Stomach (tissue), 19 donors: ENCODE measurements at regions of chr22 and their contacts with region 1.

Region 1: DNA sequence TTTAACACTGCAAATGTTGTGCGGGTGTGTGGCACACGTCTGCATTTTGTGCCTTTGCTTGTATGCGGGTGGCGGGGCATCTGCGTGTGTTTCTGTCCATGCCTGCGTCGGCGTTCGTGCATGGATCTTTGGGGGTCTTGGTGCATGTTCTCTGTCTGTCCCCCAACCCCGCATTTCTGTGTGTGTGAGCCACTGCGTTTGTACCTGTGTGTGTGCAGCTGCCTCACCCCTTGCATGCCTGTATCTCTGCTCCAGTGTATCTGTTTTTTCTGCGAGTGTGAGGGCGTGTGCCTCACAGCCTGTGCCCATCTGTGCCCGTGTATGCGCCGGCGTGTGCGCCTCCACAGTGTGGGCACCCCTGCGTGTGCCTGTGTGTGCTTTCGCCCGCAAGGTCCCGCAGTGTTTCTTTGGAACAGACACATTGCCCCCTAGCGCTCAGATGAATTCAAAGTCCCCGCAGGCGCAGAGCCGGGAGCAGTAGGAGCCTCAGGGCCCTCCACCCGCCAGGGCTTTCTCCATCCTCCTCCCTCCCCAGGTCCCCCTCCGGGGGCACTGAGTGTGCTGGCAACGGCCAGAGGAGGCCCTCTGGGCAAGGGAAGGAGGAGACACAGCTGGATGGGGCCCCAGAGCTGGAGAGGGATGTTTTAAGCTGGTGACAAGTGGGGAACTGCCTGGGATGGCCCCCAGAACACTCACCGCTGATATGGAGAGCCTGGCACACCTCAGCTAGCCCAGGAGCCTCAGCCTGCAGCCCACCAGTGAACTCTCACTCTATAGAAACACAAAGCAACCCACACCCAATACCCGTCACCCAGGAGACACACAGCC is 3.1 kb upstream of the MN1 start:
- DNase-seq: peak; percentile 75 to 90
- H3K4me3 ChIP-seq: no peak overlapping the region
- H3K27ac ChIP-seq: peak overlapping the region in 1 of 5 donors; percentile 4
- H3K4me1 ChIP-seq: peaks cover 12 to 47% (median 32%) of the 10 kb centered on the region in 4 donors
- H3K27me3 ChIP-seq: peaks cover 0 to 39% (median 14%) of the 10 kb centered on the region in 3 donors
- CTCF ChIP-seq: peak in 5 of 7 experiments; percentile 45 to 71 (median 57)
- EP300 ChIP-seq: no peak
- POLR2A ChIP-seq: no peak

Region 2: GRCh38 chr22:26756675-26757293 is 1047.9 kb before region 1 on chr22:
- intact Hi-C with region 1: loop called (anchors 10 kb)
- DNase-seq: peak; percentile 59 to 81
- H3K4me3 ChIP-seq: peak overlapping the region; percentile 19 to 37 (median 26)
- H3K27ac ChIP-seq: no peak overlapping the region
- H3K4me1 ChIP-seq: peaks cover 0 to 7% (median 6%) of the 10 kb centered on the region in 4 donors
- H3K27me3 ChIP-seq: no peaks in the 10 kb centered on the region
- CTCF ChIP-seq: peak in 5 of 7 experiments; percentile 51 to 96 (median 89)
- EP300 ChIP-seq: no peak
- POLR2A ChIP-seq: no peak

Region 3: GRCh38 chr22:27405672-27406388 is 398.9 kb before region 1 on chr22:
- intact Hi-C with region 1: loop called (anchors 10 kb)
- DNase-seq: peak; percentile 73
- H3K4me3 ChIP-seq: no peak overlapping the region
- H3K27ac ChIP-seq: no peak overlapping the region
- H3K4me1 ChIP-seq: no peaks in the 10 kb centered on the region
- H3K27me3 ChIP-seq: peaks cover 0 to under 1% (median 0%) of the 10 kb centered on the region in 3 donors
- CTCF ChIP-seq: peak in 5 of 7 experiments; percentile 55 to 83 (median 66)
- EP300 ChIP-seq: no peak
- POLR2A ChIP-seq: no peak

Region 4: DNA sequence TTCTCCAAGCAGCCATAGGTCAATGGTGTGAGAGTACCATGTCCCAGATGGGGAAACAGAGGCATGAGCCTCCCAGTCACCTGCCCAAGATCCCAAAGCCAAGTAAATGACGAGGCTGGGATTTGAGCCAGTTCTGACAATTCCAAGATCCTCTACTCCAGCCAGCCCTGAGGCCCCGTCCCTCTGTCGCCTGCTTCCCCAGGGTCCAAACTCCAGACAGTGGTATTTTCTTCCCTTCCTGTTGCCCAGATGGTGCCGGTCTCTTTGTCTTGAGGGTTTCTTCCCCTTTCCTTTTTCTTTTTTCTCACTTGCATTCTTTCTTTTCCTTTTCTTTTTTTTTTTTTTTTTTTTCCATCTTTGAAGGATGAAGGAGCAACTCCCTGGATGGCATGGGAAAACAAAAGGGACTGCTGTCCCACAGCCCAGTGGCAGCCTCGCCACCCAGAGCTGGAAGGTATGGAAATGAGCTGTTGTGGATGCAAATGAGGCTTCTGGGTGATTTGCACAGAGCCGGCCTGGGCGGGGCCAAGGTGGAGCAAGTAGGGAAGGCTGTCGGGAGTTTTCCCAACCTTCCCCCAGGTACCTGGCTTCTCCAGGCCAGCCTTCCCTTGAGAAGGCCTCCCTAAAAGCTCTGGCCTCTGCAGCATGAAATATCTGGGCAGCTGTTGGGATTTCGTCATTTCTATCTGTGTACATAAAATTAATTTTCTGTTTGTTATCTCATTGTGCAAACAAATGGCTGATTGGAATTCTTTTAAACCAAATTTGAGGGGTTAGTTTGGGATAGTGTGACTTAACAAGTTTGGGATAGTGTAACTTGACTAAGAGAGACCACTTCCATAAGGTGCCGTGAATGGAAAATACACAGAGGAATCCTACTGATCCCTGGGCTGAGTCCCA is 149.9 kb before region 1 on chr22:
- intact Hi-C with region 1: no loop called
- DNase-seq: peak; percentile 50 to 56
- H3K4me3 ChIP-seq: no peak overlapping the region
- H3K27ac ChIP-seq: no peak overlapping the region
- H3K4me1 ChIP-seq: peaks cover 8 to 23% (median 16%) of the 10 kb centered on the region in 4 donors
- H3K27me3 ChIP-seq: no peaks in the 10 kb centered on the region
- CTCF ChIP-seq: no peak
- EP300 ChIP-seq: no peak
- POLR2A ChIP-seq: no peak